Cardiac septum (tissue), 1 donor: ENCODE measurements at regions of chr6 and their contacts with region 1.

Region 1: GRCh38 chr6:97632341-97632740 is 349.3 kb upstream of the MMS22L start:
- DNase-seq: no peak

Region 2: DNA sequence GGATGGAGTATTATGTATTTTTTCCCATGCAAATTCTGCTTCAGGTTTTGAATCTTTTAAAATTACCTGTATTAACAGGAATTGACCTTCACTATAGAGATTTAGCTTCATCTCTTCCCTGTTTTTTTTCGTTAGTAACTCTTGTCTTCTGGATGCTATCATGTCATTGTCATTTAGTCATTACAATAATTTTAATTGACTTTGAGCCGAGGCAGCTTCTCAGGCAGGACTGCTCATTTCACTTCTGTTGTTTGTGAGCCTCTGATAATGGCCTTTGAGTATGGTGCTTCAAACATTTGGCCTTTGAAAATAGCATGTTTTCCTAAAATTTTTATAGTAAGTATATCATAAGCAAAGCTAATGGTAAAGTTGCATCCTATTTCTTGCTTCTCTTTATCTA is 25.7 kb after region 1 on chr6:
- intact Hi-C with region 1: loop called (anchors 2 kb)
- DNase-seq: no peak